ENCODE measurements at regions of chr2 and their contacts with region 1.

Region 1: DNA sequence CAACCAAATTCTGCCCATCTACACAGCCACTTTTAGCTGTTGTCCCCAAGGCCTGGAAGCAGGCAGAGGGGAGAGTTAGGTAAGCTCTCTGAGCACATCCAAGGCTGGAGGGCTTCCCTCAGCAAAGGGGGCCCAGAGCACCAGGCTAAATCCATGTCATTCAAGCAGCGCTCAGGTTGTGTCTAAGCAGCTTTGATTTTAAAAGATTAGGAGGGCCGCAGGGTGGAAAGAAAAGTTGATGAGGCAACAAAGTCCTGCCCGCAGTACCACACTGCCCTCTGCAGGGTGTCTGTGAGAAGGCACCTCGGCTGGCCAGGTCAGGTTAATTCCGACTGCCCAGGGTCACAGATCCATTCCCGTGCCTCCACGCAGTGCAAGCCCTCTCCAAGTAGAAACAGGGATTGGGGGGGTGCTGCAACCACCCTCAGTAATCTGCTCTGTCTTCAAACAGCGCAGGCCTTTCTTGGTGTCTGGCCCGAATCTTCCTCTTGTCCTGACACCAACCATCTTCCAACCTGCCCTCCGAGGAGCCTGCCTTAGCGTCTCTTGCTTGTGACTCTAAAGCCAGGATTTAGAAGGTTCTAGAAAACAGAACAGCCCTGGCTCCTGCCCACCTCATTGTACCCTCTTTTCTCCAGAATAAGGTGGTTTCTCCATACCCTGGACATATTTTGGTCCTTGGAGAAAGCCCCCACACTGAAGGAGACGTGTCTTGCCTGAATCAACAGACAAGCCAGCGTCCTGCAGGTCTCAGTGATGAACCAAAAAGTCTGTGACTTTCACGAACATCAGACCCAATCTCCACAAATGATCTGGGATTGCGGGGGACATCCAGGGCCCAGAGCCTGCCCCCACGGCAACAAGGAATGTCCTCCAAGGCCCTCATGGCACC is 289.2 kb downstream of the TNS1 start:
- DNase-seq: peak; percentile 76 to 88 (median 82)
- ATAC-seq: peak; percentile 42 to 82 (median 77)
- H3K4me3 ChIP-seq: no peak overlapping the region
- H3K27ac ChIP-seq: peak overlapping the region in 11 of 12 donors; percentile 35 to 74 (median 58)
- H3K4me1 ChIP-seq: peaks cover 0 to 28% (median 17%) of the 10 kb centered on the region in 12 donors
- H3K27me3 ChIP-seq: no peaks in the 10 kb centered on the region
- CTCF ChIP-seq: peak; percentile 90 to 99 (median 97)
- POLR2A ChIP-seq: no peak

Region 2: DNA sequence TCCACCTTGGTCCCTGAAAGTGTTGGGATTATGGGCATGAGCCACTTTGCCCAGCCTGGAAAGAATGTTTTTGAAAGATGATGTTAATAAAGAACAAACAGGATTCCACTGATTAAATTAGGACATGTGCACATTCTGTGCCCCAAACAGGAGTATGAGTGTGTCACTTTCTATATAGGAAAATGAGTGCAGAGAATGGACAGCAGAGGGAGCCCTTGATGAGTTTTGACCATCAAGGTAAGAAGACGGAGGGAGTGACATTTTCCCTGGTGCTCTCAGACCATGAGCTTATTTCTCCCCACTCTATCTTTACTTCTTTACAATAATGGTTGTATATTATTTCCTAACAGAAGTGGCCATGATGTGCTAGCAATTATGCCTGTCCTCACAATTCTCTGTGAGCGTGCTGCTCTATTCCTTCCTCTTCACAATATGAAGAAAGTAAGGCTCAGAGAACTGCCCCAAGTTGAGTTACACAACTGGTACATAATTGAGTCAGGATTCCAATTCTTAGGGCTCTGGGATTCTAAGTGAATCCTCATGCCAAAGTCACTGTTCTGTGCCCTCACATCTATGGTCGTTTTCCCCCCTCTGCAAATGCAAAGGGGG is 1194.4 kb before region 1 on chr2:
- intact Hi-C with region 1: loop called in 4 of 10 experiments (anchors 5 to 10 kb)
- DNase-seq: peak in 4 of 5 donors; percentile 50 to 78 (median 65)
- ATAC-seq: peak; percentile 72 to 86 (median 82)
- H3K4me3 ChIP-seq: no peak overlapping the region
- H3K27ac ChIP-seq: peak overlapping the region in 1 of 12 donors; percentile 23
- H3K4me1 ChIP-seq: peaks cover 0 to 14% (median 4%) of the 10 kb centered on the region in 12 donors
- H3K27me3 ChIP-seq: no peaks in the 10 kb centered on the region
- CTCF ChIP-seq: peak; percentile 67 to 90 (median 80)
- POLR2A ChIP-seq: no peak

Region 3: DNA sequence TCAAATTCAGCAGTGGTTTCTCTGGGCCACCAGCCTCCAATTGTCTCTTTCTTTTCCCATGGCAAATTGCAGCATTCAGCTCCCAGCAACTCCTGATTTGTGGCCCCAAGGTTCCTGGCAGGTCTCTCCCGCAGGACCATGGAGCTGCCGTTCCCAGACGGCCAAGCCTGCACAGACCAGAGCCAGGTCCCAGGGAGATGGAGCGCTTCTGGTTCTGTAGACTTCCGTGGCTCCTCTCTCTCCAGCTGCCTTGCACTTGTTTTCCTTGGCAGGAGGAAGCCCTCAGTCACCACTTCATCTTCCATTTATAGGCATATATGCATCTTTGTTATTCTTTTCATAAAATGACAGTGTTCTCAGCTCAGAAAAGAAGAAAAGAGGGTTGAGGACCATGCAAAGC is 875.5 kb before region 1 on chr2:
- intact Hi-C with region 1: loop called in 1 of 10 experiments (anchors 10 kb)
- DNase-seq: peak; percentile 41 to 75 (median 58)
- ATAC-seq: peak; percentile 59 to 73 (median 67)
- H3K4me3 ChIP-seq: no peak overlapping the region
- H3K27ac ChIP-seq: peak overlapping the region in 6 of 12 donors; percentile 2 to 59 (median 45)
- H3K4me1 ChIP-seq: peaks cover 0 to 31% (median 12%) of the 10 kb centered on the region in 12 donors
- H3K27me3 ChIP-seq: no peaks in the 10 kb centered on the region
- CTCF ChIP-seq: no peak
- POLR2A ChIP-seq: no peak

Region 4: DNA sequence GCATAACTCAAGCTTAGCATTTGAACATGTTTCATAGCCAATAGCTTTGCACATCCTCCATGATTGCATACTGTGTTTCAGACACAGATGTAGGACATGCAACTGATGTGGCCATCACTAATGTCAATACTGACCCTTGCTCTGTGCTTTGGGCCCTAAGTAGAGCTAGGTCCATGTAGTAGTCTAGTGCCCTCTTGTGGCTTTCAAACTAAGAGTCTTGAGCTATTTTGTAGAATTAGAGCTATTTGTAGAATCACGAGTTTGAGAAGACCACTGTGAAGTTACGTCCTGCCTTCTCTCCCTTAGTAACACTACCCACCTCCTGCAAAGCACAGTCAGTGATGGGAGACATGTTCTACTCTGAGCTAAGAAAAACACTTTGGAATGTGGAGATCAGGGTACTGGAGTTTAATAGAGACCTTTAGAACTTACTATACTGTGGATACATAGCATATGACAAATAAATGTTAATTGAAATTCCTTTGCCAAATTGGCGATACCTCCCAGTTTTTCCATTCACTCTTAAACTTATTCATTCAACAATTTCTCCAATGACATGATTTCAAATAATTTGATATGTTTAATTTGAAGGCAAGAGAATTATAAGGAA is 547.3 kb before region 1 on chr2:
- intact Hi-C with region 1: loop called in 6 of 10 experiments (anchors 5 to 10 kb)
- DNase-seq: peak in 1 of 5 donors; percentile 22
- ATAC-seq: peak; percentile 55 to 81 (median 68)
- H3K4me3 ChIP-seq: no peak overlapping the region
- H3K27ac ChIP-seq: no peak overlapping the region
- H3K4me1 ChIP-seq: peaks cover 0 to 24% (median 6%) of the 10 kb centered on the region in 12 donors
- H3K27me3 ChIP-seq: peaks cover 0 to 52% (median 0%) of the 10 kb centered on the region in 9 donors
- CTCF ChIP-seq: peak; percentile 51 to 82 (median 64)
- POLR2A ChIP-seq: no peak

Region 5: GRCh38 chr2:217521820-217522219 is 191.8 kb before region 1 on chr2:
- intact Hi-C with region 1: loop called in 3 of 10 experiments (anchors 5 to 10 kb)
- DNase-seq: no peak
- ATAC-seq: peak in 1 of 4 donors; percentile 16
- H3K4me3 ChIP-seq: no peak overlapping the region
- H3K27ac ChIP-seq: peak overlapping the region in 1 of 12 donors; percentile 39
- H3K4me1 ChIP-seq: peaks cover 0 to 15% (median 4%) of the 10 kb centered on the region in 12 donors
- H3K27me3 ChIP-seq: no peaks in the 10 kb centered on the region
- CTCF ChIP-seq: no peak
- POLR2A ChIP-seq: no peak

Region 6: GRCh38 chr2:217756375-217757107 is 42.9 kb after region 1 on chr2:
- intact Hi-C with region 1: loop called in 1 of 10 experiments (anchors 5 kb)
- DNase-seq: peak; percentile 65 to 84 (median 74)
- ATAC-seq: peak; percentile 76 to 91 (median 86)
- H3K4me3 ChIP-seq: peak overlapping the region in 8 of 12 donors; percentile 11 to 39 (median 31)
- H3K27ac ChIP-seq: peak overlapping the region in 1 of 12 donors; percentile 26
- H3K4me1 ChIP-seq: peaks cover 0 to 24% (median 7%) of the 10 kb centered on the region in 12 donors
- H3K27me3 ChIP-seq: peaks cover 0 to 6% (median 0%) of the 10 kb centered on the region in 9 donors
- CTCF ChIP-seq: peak; percentile 87 to 98 (median 94)
- POLR2A ChIP-seq: no peak

Measured in heart left ventricle (tissue), 16 donors.